Activated CD4-positive, alpha-beta memory T cell treated with anti-CD3 and anti-CD28 coated beads for 36 hours (primary cell): ENCODE measurements at regions of chr10 and their contacts with region 1.

Region 1: DNA sequence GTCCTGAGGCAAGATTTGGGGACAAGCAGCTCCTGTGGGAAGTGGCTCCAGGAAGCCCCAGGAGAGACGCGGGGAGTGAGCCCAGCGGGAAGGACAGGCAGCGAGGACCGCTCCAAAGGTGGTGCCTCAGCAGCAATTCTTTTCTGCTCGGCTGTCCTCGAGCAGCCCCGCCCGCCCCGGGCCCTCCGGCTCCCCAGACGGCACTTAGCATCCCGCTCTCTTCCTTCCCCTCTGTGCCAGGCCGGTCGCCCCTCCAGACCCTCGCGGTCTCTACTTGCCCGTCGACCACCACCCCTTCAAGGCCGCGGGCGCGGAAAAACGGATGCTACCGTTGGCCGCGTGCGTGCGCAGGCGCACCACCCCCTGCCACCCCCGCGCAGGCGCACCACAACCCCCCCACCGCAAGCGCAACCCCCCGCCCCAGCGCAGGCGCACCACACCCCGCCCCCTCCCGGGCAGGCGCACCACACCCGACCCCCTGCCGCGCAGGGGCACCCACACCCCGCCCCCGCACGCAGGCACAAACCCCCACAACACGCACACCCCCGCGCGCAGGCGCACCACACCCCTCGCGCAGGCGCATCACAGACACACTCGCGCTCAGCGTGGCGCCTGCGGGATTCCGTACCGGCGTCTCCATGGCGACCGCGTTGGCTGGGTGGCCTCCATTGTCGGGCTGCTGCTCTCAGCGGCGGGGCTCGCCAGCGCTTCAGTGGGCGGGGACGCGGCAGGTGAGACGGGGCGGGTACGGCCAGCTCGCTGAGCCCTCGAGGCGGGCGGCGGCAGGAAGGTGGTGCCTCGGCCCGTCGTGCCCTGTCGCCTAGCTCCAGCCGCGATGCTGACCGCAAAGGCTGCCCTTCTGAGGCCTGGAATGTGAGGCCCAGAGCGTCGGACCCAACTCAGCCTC is at the start of gene LRRC27:
- DNase-seq: peak; percentile 99
- H3K4me3 Mint-ChIP-seq: peak within 1 kb of the TSS; percentile 90
- H3K27ac Mint-ChIP-seq: peak within 1 kb of the TSS; percentile 91
- H3K4me1 Mint-ChIP-seq: peaks cover 48% of the 10 kb centered on the region
- H3K27me3 Mint-ChIP-seq: peaks cover 1% of the 10 kb centered on the region
- total RNA-seq, gene LRRC27: 2.5 to 2.8 TPM

Region 2: GRCh38 chr10:132307823-132308587 is 23.8 kb before region 1 on chr10 and contains the start of gene STK32C:
- CTCF ChIA-PET with region 1: no interaction called
- POLR2A ChIA-PET with region 1: no interaction called
- intact Hi-C with region 1: loop called (anchors 1 kb)
- DNase-seq: peak; percentile 93
- H3K4me3 Mint-ChIP-seq: peak within 1 kb of the TSS; percentile 85
- H3K27ac Mint-ChIP-seq: no peak within 1 kb of the TSS
- H3K4me1 Mint-ChIP-seq: peaks cover 11% of the 10 kb centered on the region
- H3K27me3 Mint-ChIP-seq: peaks cover 3% of the 10 kb centered on the region
- total RNA-seq, gene STK32C: 14.8 to 16.1 TPM

Region 3: DNA sequence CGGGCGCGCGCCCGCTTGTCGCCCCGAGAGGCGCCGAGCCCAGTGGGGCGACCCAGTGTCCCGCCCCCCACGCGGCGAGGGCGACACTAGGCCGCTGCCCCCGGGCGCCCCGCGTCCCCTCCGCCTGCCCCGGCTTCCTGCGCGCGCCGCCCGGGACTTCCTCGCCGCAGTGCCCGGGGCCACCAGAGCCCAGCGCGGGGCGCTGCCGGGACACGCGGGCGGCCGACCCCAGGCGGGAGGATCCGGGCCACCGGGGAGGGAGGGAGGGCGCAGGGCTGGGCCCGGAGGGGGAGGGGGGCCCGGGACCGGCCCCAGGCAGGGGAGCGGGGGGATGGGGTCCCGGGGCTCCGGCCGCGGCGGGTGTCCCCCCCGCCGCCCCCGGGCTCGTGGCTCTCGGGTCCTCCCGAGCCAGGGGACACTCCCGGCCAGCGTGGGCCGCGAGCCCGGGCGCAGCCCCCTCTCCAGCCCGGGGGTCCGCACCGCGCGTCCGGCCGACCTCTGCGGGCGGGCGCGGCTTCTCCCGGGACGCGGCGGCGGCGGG is 64.8 kb after region 1 on chr10:
- CTCF ChIA-PET with region 1: no interaction called
- POLR2A ChIA-PET with region 1: no interaction called
- intact Hi-C with region 1: loop called (anchors 5 kb)
- DNase-seq: peak; percentile 72
- H3K4me3 Mint-ChIP-seq: no peak overlapping the region
- H3K27ac Mint-ChIP-seq: no peak overlapping the region
- H3K4me1 Mint-ChIP-seq: peaks cover 12% of the 10 kb centered on the region
- H3K27me3 Mint-ChIP-seq: no peaks in the 10 kb centered on the region

Region 4: GRCh38 chr10:132452631-132453469 is 121.1 kb after region 1 on chr10:
- CTCF ChIA-PET with region 1: no interaction called
- POLR2A ChIA-PET with region 1: no interaction called
- intact Hi-C with region 1: loop called (anchors 2 kb)
- DNase-seq: peak; percentile 91
- H3K4me3 Mint-ChIP-seq: peak overlapping the region; percentile 48
- H3K27ac Mint-ChIP-seq: peak overlapping the region; percentile 73
- H3K4me1 Mint-ChIP-seq: peaks cover 18% of the 10 kb centered on the region
- H3K27me3 Mint-ChIP-seq: no peaks in the 10 kb centered on the region